Heart left ventricle (tissue), 16 donors: ENCODE measurements at regions of chr2 and their contacts with region 1.

Region 1: DNA sequence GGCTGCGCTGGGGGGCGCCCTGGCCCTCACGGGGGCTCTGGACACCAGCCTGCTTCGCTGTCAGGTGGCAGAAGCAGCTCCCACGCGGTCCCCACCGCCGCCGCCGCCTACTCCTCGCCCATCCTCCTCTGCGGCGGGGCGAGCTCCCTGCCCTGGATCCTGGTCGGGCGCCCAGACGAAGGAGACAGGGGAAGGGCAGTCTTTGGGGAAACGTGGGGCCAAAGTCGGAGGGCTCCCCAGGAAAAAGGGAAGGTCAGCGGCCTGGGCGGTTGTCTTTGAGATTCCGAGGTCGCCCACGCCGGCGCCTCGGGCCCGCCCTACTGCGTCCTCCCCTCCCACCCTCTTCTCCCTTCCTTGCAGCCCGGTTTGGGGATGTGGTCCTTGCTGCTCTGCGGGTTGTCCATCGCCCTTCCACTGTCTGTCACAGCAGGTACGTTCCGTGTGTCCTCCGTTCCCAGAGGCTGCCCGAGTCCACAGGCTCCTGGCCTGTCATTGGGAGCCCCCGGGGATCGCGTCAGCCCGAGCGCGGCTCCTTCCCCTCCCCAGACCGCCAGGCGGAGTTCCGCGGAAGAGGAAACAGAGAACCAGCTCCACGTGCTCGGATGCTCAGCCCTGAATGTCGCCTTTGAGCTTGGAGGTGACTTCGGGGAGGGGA is 800 bp downstream of the IL1RL2 start:
- DNase-seq: peak; percentile 61 to 83 (median 62)
- ATAC-seq: peak; percentile 62 to 92 (median 86)
- H3K4me3 ChIP-seq: peak overlapping the region; percentile 22 to 64 (median 55)
- H3K27ac ChIP-seq: peak overlapping the region in 9 of 12 donors; percentile 23 to 70 (median 54)
- H3K4me1 ChIP-seq: peaks cover 0 to 24% (median 5%) of the 10 kb centered on the region in 12 donors
- H3K27me3 ChIP-seq: peaks cover 0 to 2% (median 0%) of the 10 kb centered on the region in 9 donors
- CTCF ChIP-seq: peak in 9 of 12 donors; percentile 21 to 53 (median 27)
- POLR2A ChIP-seq: peak in 1 of 2 donors; percentile 16

Region 2: GRCh38 chr2:102224824-102225739 is 37.5 kb after region 1 on chr2:
- intact Hi-C with region 1: loop called in 1 of 10 experiments (anchors 2 kb)
- DNase-seq: no peak
- ATAC-seq: no peak
- H3K4me3 ChIP-seq: no peak overlapping the region
- H3K27ac ChIP-seq: no peak overlapping the region
- H3K4me1 ChIP-seq: peaks cover 9 to 44% (median 25%) of the 10 kb centered on the region in 12 donors
- H3K27me3 ChIP-seq: no peaks in the 10 kb centered on the region
- CTCF ChIP-seq: no peak
- POLR2A ChIP-seq: no peak